Activated CD4-positive, alpha-beta memory T cell treated with anti-CD3 and anti-CD28 coated beads for 36 hours (primary cell): ENCODE measurements at regions of chr5 and their contacts with region 1.

Region 1: GRCh38 chr5:40223884-40224402 is 455.8 kb upstream of the PTGER4 start:
- DNase-seq: peak; percentile 67
- H3K4me3 Mint-ChIP-seq: peak overlapping the region; percentile 59
- H3K27ac Mint-ChIP-seq: peak overlapping the region; percentile 95
- H3K4me1 Mint-ChIP-seq: peaks cover 66% of the 10 kb centered on the region
- H3K27me3 Mint-ChIP-seq: no peaks in the 10 kb centered on the region

Region 2: GRCh38 chr5:39177631-39177964 is 1046.3 kb before region 1 on chr5:
- CTCF ChIA-PET with region 1: no interaction called
- POLR2A ChIA-PET with region 1: no interaction called
- intact Hi-C with region 1: loop called (anchors 10 kb)
- DNase-seq: no peak
- H3K4me3 Mint-ChIP-seq: peak overlapping the region; percentile 63
- H3K27ac Mint-ChIP-seq: peak overlapping the region; percentile 88
- H3K4me1 Mint-ChIP-seq: peaks cover 97% of the 10 kb centered on the region
- H3K27me3 Mint-ChIP-seq: no peaks in the 10 kb centered on the region

Region 3: DNA sequence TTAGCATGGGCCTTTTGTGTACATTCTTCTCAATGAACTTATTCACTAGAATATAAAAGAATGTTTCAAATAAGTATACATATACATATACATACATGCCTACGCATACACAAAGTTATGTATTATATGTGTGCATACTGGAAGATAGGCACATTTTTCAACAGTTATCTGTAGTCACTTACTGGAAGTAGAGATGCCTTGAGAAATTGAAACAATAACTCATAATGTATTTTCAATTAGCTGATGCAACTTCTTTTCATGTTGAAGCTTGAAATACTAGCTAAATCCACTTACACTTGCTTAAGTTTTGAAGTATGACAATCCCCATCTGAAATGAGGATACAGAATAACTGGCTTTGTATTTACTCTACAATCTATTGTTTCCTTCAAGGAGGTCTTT is 13.2 kb before region 1 on chr5:
- CTCF ChIA-PET with region 1: no interaction called
- POLR2A ChIA-PET with region 1: interaction called, 21 read pairs
- intact Hi-C with region 1: loop called (anchors 1 kb)
- DNase-seq: no peak
- H3K4me3 Mint-ChIP-seq: no peak overlapping the region
- H3K27ac Mint-ChIP-seq: peak overlapping the region; percentile 94
- H3K4me1 Mint-ChIP-seq: peaks cover 65% of the 10 kb centered on the region
- H3K27me3 Mint-ChIP-seq: no peaks in the 10 kb centered on the region

Region 4: DNA sequence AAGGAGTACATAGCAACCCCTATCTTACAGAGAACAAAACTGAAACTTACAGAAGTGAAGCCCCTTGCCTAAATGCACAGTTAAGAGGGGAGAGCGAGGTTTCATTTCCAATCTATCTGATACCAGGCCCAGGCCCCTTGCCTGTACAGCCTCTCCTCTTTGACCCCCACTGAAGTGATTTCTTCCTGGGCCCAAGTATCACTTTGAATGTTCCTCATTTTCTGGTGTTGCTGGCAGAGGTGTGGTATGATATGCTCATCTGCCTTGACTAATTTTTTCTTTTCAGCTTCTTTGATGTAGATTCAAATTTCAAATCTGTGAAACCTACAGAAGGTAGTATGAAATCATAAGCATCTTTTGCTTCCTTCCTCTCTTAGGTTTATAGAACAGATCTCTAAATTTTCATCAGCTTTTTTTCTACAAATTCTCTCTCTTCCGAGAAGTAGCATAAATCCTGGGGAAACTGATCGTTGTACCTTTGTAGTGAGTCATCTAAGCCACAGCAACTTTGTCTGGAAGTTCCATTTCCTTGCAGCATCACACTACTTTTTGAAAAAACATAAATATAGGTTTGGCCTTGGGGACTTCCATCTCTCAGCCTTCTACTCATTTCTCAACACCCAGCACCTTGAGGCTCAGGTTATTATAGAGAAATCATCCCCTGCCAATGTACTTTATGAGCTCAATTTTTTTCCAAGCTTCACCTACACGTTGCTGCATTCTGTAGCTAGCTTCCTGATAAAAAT is 53.4 kb after region 1 on chr5:
- CTCF ChIA-PET with region 1: no interaction called
- POLR2A ChIA-PET with region 1: interaction called, 21 read pairs
- intact Hi-C with region 1: loop called (anchors 1 kb)
- DNase-seq: peak; percentile 63
- H3K4me3 Mint-ChIP-seq: peak overlapping the region; percentile 18
- H3K27ac Mint-ChIP-seq: peak overlapping the region; percentile 97
- H3K4me1 Mint-ChIP-seq: peaks cover 61% of the 10 kb centered on the region
- H3K27me3 Mint-ChIP-seq: no peaks in the 10 kb centered on the region

Region 5: DNA sequence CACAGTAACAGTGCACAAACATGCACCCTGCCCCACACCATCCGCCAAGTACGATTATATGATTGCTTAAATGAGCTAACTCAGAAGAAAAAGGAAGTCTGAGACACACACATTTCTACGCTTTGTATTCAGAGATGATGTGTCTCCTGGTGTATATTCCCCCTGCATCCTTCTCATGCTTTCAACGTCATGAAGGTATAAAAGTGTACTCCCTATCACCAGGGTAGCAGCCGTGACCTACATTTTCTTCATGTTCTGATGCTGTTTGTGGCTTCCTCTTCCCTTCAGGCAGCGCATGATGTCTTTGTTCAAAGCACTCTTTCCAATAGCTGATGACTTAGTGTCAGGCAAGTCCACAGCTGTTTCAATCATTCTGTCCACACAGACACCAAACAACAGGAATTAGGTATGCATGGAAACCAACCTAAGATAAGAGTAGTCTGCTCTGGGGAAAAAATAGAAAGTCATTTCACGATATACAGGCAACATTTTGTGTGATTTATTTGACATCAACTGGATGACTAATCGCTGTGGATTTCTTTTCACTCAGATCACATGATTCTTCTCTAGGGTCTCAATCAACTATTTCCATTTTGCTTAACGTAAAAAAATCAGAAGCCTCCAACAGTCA is 186.4 kb after region 1 on chr5:
- CTCF ChIA-PET with region 1: interaction called, 3 read pairs
- POLR2A ChIA-PET with region 1: interaction called, 12 read pairs
- intact Hi-C with region 1: loop called (anchors 1 kb)
- DNase-seq: peak; percentile 82
- H3K4me3 Mint-ChIP-seq: peak overlapping the region; percentile 62
- H3K27ac Mint-ChIP-seq: peak overlapping the region; percentile 99
- H3K4me1 Mint-ChIP-seq: peaks cover 64% of the 10 kb centered on the region
- H3K27me3 Mint-ChIP-seq: no peaks in the 10 kb centered on the region

Region 6: GRCh38 chr5:40679155-40679913 is 455.4 kb after region 1 on chr5:
- CTCF ChIA-PET with region 1: no interaction called
- POLR2A ChIA-PET with region 1: interaction called, 32 read pairs
- intact Hi-C with region 1: no loop called
- DNase-seq: peak; percentile 96
- H3K4me3 Mint-ChIP-seq: peak overlapping the region; percentile 93
- H3K27ac Mint-ChIP-seq: peak overlapping the region; percentile 97
- H3K4me1 Mint-ChIP-seq: peaks cover 37% of the 10 kb centered on the region
- H3K27me3 Mint-ChIP-seq: no peaks in the 10 kb centered on the region

Region 7: GRCh38 chr5:40834849-40835787 is 611.2 kb after region 1 on chr5 and contains the start of gene RPL37:
- CTCF ChIA-PET with region 1: no interaction called
- POLR2A ChIA-PET with region 1: no interaction called
- intact Hi-C with region 1: loop called (anchors 2 kb)
- DNase-seq: peak; percentile 96
- H3K4me3 Mint-ChIP-seq: peak within 1 kb of the TSS; percentile 100
- H3K27ac Mint-ChIP-seq: peak within 1 kb of the TSS; percentile 100
- H3K4me1 Mint-ChIP-seq: peaks cover 56% of the 10 kb centered on the region
- H3K27me3 Mint-ChIP-seq: no peaks in the 10 kb centered on the region
- total RNA-seq, gene RPL37: 1,815 to 1,873 TPM